ENCODE measurements at regions of chr16 and their contacts with region 1.

Region 1: GRCh38 chr16:52191531-52192134 is 355.3 kb downstream of the TOX3 start:
- DNase-seq: peak; percentile 2
- H3K4me3 ChIP-seq: no peak overlapping the region
- H3K27me3 ChIP-seq: no peaks in the 10 kb centered on the region
- CTCF ChIP-seq: peak; percentile 93

Region 2: GRCh38 chr16:52203096-52203495 is 11.5 kb after region 1 on chr16:
- CTCF ChIA-PET with region 1: interaction called, 15 read pairs
- POLR2A ChIA-PET with region 1: no interaction called
- DNase-seq: no peak
- H3K4me3 ChIP-seq: no peak overlapping the region
- H3K27me3 ChIP-seq: no peaks in the 10 kb centered on the region
- CTCF ChIP-seq: no peak

Region 3: GRCh38 chr16:53022374-53022773 is 830.7 kb after region 1 on chr16:
- CTCF ChIA-PET with region 1: interaction called, 52 read pairs
- POLR2A ChIA-PET with region 1: no interaction called
- DNase-seq: no peak
- H3K4me3 ChIP-seq: no peak overlapping the region
- H3K27me3 ChIP-seq: no peaks in the 10 kb centered on the region; the same call in 1 of the 2 replicates
- CTCF ChIP-seq: peak; percentile 59